CD4-positive, alpha-beta memory T cell (primary cell): ENCODE measurements at regions of chr10 and their contacts with region 1.

Region 1: GRCh38 chr10:119502209-119502608 is 40.3 kb downstream of the RGS10 start:
- DNase-seq: peak; percentile 83 to 94 (median 84)
- H3K4me3 ChIP-seq: peak overlapping the region; percentile 14 to 39
- H3K4me3 Mint-ChIP-seq: peak overlapping the region; percentile 68 to 89 (median 82)
- H3K27ac ChIP-seq: peak overlapping the region; percentile 79
- H3K27ac Mint-ChIP-seq: peak overlapping the region; percentile 95 to 99 (median 97)
- H3K4me1 ChIP-seq: peaks cover 74% of the 10 kb centered on the region
- H3K4me1 Mint-ChIP-seq: peaks cover 47 to 88% (median 73%) of the 10 kb centered on the region in 4 donors
- H3K27me3 ChIP-seq: no peaks in the 10 kb centered on the region
- H3K27me3 Mint-ChIP-seq: no peaks in the 10 kb centered on the region

Region 2: GRCh38 chr10:119445311-119445934 is 56.8 kb before region 1 on chr10:
- CTCF ChIA-PET with region 1: interaction called, 6 read pairs
- POLR2A ChIA-PET with region 1: interaction called, 5 read pairs
- intact Hi-C with region 1: loop called (anchors 5 kb)
- DNase-seq: peak; percentile 72 to 79 (median 76)
- H3K4me3 ChIP-seq: no peak overlapping the region
- H3K4me3 Mint-ChIP-seq: peak overlapping the region in 1 of 8 donors; percentile 22
- H3K27ac ChIP-seq: no peak overlapping the region
- H3K27ac Mint-ChIP-seq: peak overlapping the region in 3 of 7 donors; percentile 43 to 65 (median 48)
- H3K4me1 ChIP-seq: peaks cover 6% of the 10 kb centered on the region
- H3K4me1 Mint-ChIP-seq: peaks cover 1 to 13% (median 8%) of the 10 kb centered on the region in 4 donors
- H3K27me3 ChIP-seq: no peaks in the 10 kb centered on the region
- H3K27me3 Mint-ChIP-seq: no peaks in the 10 kb centered on the region

Region 3: GRCh38 chr10:119478111-119478802 is 24.0 kb before region 1 on chr10:
- CTCF ChIA-PET with region 1: interaction called, 3 read pairs
- POLR2A ChIA-PET with region 1: interaction called, 10 read pairs
- intact Hi-C with region 1: loop called (anchors 1 kb)
- DNase-seq: peak in 4 of 5 donors; percentile 33 to 45 (median 36)
- H3K4me3 ChIP-seq: peak overlapping the region in 1 of 2 donors; percentile 13
- H3K4me3 Mint-ChIP-seq: peak overlapping the region; percentile 26 to 85 (median 71)
- H3K27ac ChIP-seq: peak overlapping the region; percentile 11
- H3K27ac Mint-ChIP-seq: peak overlapping the region; percentile 64 to 90 (median 88)
- H3K4me1 ChIP-seq: peaks cover 30% of the 10 kb centered on the region
- H3K4me1 Mint-ChIP-seq: peaks cover 24 to 38% (median 30%) of the 10 kb centered on the region in 4 donors
- H3K27me3 ChIP-seq: no peaks in the 10 kb centered on the region
- H3K27me3 Mint-ChIP-seq: no peaks in the 10 kb centered on the region

Region 4: DNA sequence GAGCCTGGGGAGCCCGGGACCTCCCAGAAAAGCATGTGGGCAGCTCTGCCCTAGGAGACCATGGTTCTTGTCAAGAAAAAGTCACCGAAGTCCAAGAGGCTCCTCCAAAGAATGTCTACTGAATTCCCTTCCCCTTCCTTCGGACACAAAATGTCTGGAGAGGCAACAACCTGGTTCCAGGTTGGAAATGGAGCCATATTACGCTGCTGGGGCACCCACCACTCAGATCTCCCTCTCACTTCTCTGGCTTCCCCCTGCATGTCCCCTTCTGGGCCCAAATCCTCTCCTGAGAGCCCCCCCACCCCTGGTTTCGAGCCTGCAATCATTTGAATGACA is 12.2 kb before region 1 on chr10:
- CTCF ChIA-PET with region 1: interaction called, 20 read pairs
- POLR2A ChIA-PET with region 1: interaction called, 33 read pairs
- intact Hi-C with region 1: loop called (anchors 1 kb)
- DNase-seq: no peak
- H3K4me3 ChIP-seq: peak overlapping the region in 1 of 2 donors; percentile 51
- H3K4me3 Mint-ChIP-seq: peak overlapping the region; percentile 18 to 92 (median 88)
- H3K27ac ChIP-seq: peak overlapping the region; percentile 68
- H3K27ac Mint-ChIP-seq: peak overlapping the region; percentile 82 to 97 (median 95)
- H3K4me1 ChIP-seq: peaks cover 45% of the 10 kb centered on the region
- H3K4me1 Mint-ChIP-seq: peaks cover 25 to 50% (median 33%) of the 10 kb centered on the region in 4 donors
- H3K27me3 ChIP-seq: no peaks in the 10 kb centered on the region
- H3K27me3 Mint-ChIP-seq: no peaks in the 10 kb centered on the region

Region 5: GRCh38 chr10:119517235-119518141 is 15.3 kb after region 1 on chr10:
- CTCF ChIA-PET with region 1: interaction called, 9 read pairs
- POLR2A ChIA-PET with region 1: interaction called, 68 read pairs
- intact Hi-C with region 1: loop called (anchors 1 kb)
- DNase-seq: peak; percentile 27 to 78 (median 45)
- H3K4me3 ChIP-seq: peak overlapping the region; percentile 23 to 36
- H3K4me3 Mint-ChIP-seq: peak overlapping the region; percentile 50 to 82 (median 79)
- H3K27ac ChIP-seq: peak overlapping the region; percentile 70
- H3K27ac Mint-ChIP-seq: peak overlapping the region; percentile 88 to 97 (median 95)
- H3K4me1 ChIP-seq: peaks cover 60% of the 10 kb centered on the region
- H3K4me1 Mint-ChIP-seq: peaks cover 22 to 63% (median 47%) of the 10 kb centered on the region in 4 donors
- H3K27me3 ChIP-seq: no peaks in the 10 kb centered on the region
- H3K27me3 Mint-ChIP-seq: no peaks in the 10 kb centered on the region

Region 6: GRCh38 chr10:119596537-119597404 is 94.6 kb after region 1 on chr10 and contains the start of gene TIAL1:
- CTCF ChIA-PET with region 1: no interaction called
- POLR2A ChIA-PET with region 1: no interaction called
- intact Hi-C with region 1: loop called (anchors 5 kb)
- DNase-seq: peak; percentile 89 to 97 (median 91)
- H3K4me3 ChIP-seq: peak within 1 kb of the TSS; percentile 83 to 99
- H3K4me3 Mint-ChIP-seq: peak within 1 kb of the TSS; percentile 93 to 100 (median 99)
- H3K27ac ChIP-seq: peak within 1 kb of the TSS; percentile 98
- H3K27ac Mint-ChIP-seq: peak within 1 kb of the TSS; percentile 97 to 100 (median 99)
- H3K4me1 ChIP-seq: peaks cover 43% of the 10 kb centered on the region
- H3K4me1 Mint-ChIP-seq: peaks cover 37 to 57% (median 44%) of the 10 kb centered on the region in 4 donors
- H3K27me3 ChIP-seq: no peaks in the 10 kb centered on the region
- H3K27me3 Mint-ChIP-seq: no peaks in the 10 kb centered on the region
- total RNA-seq, gene TIAL1: 201 to 212 TPM

Region 7: GRCh38 chr10:119650692-119651513 is 148.7 kb after region 1 on chr10 and contains the start of gene BAG3:
- CTCF ChIA-PET with region 1: no interaction called
- POLR2A ChIA-PET with region 1: no interaction called
- intact Hi-C with region 1: loop called (anchors 2 kb)
- DNase-seq: peak; percentile 66 to 80 (median 68)
- H3K4me3 ChIP-seq: peak within 1 kb of the TSS; percentile 88 to 89
- H3K4me3 Mint-ChIP-seq: peak within 1 kb of the TSS; percentile 94 to 100 (median 96)
- H3K27ac ChIP-seq: peak within 1 kb of the TSS; percentile 87
- H3K27ac Mint-ChIP-seq: peak within 1 kb of the TSS; percentile 96 to 99 (median 96)
- H3K4me1 ChIP-seq: peaks cover 45% of the 10 kb centered on the region
- H3K4me1 Mint-ChIP-seq: peaks cover 36 to 45% (median 43%) of the 10 kb centered on the region in 4 donors
- H3K27me3 ChIP-seq: no peaks in the 10 kb centered on the region
- H3K27me3 Mint-ChIP-seq: peaks cover 0 to under 1% of the 10 kb centered on the region in 2 donors
- total RNA-seq, gene BAG3: 20.8 to 21.6 TPM